ENCODE measurements at regions of chr2 and their contacts with region 1.

Region 1: GRCh38 chr2:218269899-218270720 is at the starts of genes AAMP and PNKD:
- DNase-seq: peak; percentile 94 to 98 (median 96)
- ATAC-seq: peak; percentile 91
- H3K4me3 ChIP-seq: peak within 1 kb of the TSS; percentile 84
- H3K27ac ChIP-seq: peak within 1 kb of the TSS; percentile 80
- H3K4me1 ChIP-seq: peaks cover 4 to 25% of the 10 kb centered on the region in 2 experiments; a peak in 3 of 5 replicates
- H3K27me3 ChIP-seq: no peaks in the 10 kb centered on the region
- CTCF ChIP-seq: peak in 2 of 3 experiments; percentile 25 to 37; a peak in 3 of 6 replicates
- EP300 ChIP-seq: no peak
- POLR2A ChIP-seq: peak; percentile 83
- RAD21 ChIP-seq: 0 out of 4 replicates have a peak, but pooled peaks of 1 of the 2 experiments have one; percentile 1
- polyA plus RNA-seq, gene AAMP: 5.7 to 8.9 TPM
- polyA plus RNA-seq, gene PNKD: 89.1 to 105 TPM

Region 2: DNA sequence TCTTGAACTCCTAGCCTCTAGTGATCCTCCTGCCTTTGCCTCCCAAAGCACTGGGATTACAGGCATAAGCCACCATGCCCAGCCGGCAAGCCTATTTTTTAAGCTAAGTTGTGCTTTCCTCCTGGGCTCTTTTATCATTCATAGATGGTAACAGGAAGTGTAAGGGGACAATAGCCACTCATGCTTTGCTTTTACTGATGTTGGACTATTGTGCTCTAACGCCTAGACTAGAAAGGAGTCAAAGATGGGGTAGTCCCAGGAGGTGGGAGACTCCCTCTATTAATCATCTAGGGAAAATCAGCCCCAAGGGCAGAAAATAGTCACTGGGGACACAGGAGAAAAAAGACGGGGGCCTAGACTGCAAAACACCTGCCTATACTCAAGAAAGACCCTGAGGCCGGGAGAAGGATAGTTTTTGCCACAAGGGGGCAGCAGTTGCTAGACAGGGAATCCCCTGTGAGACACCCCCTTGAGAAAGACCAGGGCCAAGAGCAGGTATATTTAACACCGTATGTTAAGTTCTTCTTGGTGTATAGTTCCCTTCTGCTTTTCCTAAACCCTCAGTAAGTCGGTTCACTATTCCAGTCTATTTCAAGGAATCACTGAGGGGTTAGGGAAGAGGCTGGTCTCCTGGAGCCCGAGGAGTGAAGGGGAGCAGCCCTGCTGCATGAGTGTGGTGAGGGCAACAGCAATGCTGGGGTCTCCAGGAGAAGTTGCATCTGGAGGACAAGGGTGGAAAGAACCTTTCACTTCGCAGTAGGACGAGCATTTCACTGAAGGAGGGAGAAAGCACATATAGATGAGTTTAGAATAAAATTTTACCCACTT is 101.3 kb before region 1 on chr2:
- CTCF ChIA-PET with region 1: no interaction called
- POLR2A ChIA-PET with region 1: no interaction called
- in situ Hi-C with region 1: no loop called
- intact Hi-C with region 1: no loop called
- DNase-seq: peak; percentile 62 to 69 (median 66)
- ATAC-seq: peak; percentile 95
- H3K4me3 ChIP-seq: no peak overlapping the region
- H3K27ac ChIP-seq: no peak overlapping the region
- H3K4me1 ChIP-seq: no peaks in the 10 kb centered on the region; a peak in 2 of 5 replicates
- H3K27me3 ChIP-seq: peaks cover 11 to 17% of the 10 kb centered on the region in 2 experiments; a peak in 4 of 5 replicates
- CTCF ChIP-seq: peak; percentile 69 to 79 (median 70)
- EP300 ChIP-seq: no peak
- POLR2A ChIP-seq: no peak
- RAD21 ChIP-seq: peak; percentile 23 to 58

Region 3: GRCh38 chr2:218286570-218287459 is 16.7 kb after region 1 on chr2:
- CTCF ChIA-PET with region 1: interaction called, 5 read pairs
- POLR2A ChIA-PET with region 1: interaction called, 19 read pairs
- in situ Hi-C with region 1: no loop called
- intact Hi-C with region 1: loop called (anchors 2 kb)
- DNase-seq: peak; percentile 71 to 93 (median 77)
- ATAC-seq: peak; percentile 84
- H3K4me3 ChIP-seq: peak overlapping the region; percentile 14
- H3K27ac ChIP-seq: peak overlapping the region; percentile 88
- H3K4me1 ChIP-seq: peaks cover 35 to 50% of the 10 kb centered on the region in 2 experiments
- H3K27me3 ChIP-seq: no peaks in the 10 kb centered on the region
- CTCF ChIP-seq: no peak
- EP300 ChIP-seq: peak; percentile 6; the same call in 1 of the 2 replicates
- POLR2A ChIP-seq: peak; percentile 87
- RAD21 ChIP-seq: no peak

Region 4: GRCh38 chr2:218360447-218360846 is 90.3 kb after region 1 on chr2:
- CTCF ChIA-PET with region 1: interaction called, 3 read pairs
- POLR2A ChIA-PET with region 1: no interaction called
- in situ Hi-C with region 1: no loop called
- intact Hi-C with region 1: loop called (anchors 1 kb)
- DNase-seq: peak; percentile 35 to 63 (median 40)
- ATAC-seq: peak; percentile 15; the same call in 1 of the 3 replicates
- H3K4me3 ChIP-seq: no peak overlapping the region
- H3K27ac ChIP-seq: no peak overlapping the region
- H3K4me1 ChIP-seq: peaks cover 25 to 36% of the 10 kb centered on the region in 2 experiments; a peak in 4 of 5 replicates
- H3K27me3 ChIP-seq: no peaks in the 10 kb centered on the region
- CTCF ChIP-seq: no peak
- EP300 ChIP-seq: no peak
- POLR2A ChIP-seq: no peak
- RAD21 ChIP-seq: no peak

Region 5: DNA sequence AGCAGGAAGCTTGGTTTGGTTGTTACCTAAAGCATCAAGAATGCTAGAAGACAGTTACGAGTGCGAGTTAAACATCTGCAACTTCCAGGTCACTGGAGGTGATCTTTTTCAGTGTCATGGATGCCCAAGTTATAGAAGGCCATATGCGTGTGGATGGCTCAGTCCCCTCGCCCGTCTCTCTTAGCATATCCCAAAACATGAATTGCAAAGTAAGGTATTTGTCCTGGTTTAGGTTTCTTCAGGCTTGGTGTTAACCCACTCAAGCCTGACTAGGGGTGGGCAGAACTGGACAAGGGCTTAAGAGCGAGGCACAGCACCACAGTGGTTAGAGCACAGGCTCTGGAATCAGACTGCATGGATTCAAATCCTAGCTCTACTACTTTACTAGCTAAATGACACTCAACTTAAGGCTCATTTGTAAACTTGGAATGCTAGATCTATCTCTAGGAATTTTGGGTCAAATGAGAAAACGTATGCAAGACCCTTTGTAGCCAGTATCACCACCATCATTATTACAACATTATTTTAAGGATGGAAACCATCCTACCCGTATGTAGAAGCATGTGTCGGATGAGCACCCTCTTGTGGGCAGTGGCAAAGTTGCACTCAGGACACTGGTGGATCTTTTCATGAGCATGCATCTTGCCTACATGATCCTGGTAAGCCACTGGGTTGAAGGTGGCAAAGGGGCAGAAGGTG is 378.1 kb after region 1 on chr2:
- CTCF ChIA-PET with region 1: interaction called, 5 read pairs
- POLR2A ChIA-PET with region 1: interaction called, 3 read pairs
- in situ Hi-C with region 1: no loop called
- intact Hi-C with region 1: loop called (anchors 10 kb)
- DNase-seq: peak; percentile 23 to 50 (median 44)
- ATAC-seq: peak; percentile 93
- H3K4me3 ChIP-seq: no peak overlapping the region
- H3K27ac ChIP-seq: no peak overlapping the region
- H3K4me1 ChIP-seq: no peaks in the 10 kb centered on the region
- H3K27me3 ChIP-seq: no peaks in the 10 kb centered on the region
- CTCF ChIP-seq: peak; percentile 62 to 82 (median 68)
- EP300 ChIP-seq: no peak
- POLR2A ChIP-seq: no peak
- RAD21 ChIP-seq: peak; percentile 33 to 51